Activated naive CD4-positive, alpha-beta T cell treated with anti-CD3 and anti-CD28 coated beads for 36 hours (primary cell): ENCODE measurements at regions of chr10 and their contacts with region 1.

Region 1: GRCh38 chr10:26890956-26891355 is 30.2 kb upstream of the ABI1 start:
- DNase-seq: peak; percentile 64
- H3K4me3 Mint-ChIP-seq: no peak overlapping the region
- H3K27ac Mint-ChIP-seq: no peak overlapping the region
- H3K4me1 Mint-ChIP-seq: no peaks in the 10 kb centered on the region
- H3K27me3 Mint-ChIP-seq: no peaks in the 10 kb centered on the region

Region 2: GRCh38 chr10:26566525-26567350 is 324.2 kb before region 1 on chr10:
- CTCF ChIA-PET with region 1: no interaction called
- intact Hi-C with region 1: no loop called
- DNase-seq: no peak
- H3K4me3 Mint-ChIP-seq: no peak overlapping the region
- H3K27ac Mint-ChIP-seq: no peak overlapping the region
- H3K4me1 Mint-ChIP-seq: no peaks in the 10 kb centered on the region
- H3K27me3 Mint-ChIP-seq: no peaks in the 10 kb centered on the region

Region 3: DNA sequence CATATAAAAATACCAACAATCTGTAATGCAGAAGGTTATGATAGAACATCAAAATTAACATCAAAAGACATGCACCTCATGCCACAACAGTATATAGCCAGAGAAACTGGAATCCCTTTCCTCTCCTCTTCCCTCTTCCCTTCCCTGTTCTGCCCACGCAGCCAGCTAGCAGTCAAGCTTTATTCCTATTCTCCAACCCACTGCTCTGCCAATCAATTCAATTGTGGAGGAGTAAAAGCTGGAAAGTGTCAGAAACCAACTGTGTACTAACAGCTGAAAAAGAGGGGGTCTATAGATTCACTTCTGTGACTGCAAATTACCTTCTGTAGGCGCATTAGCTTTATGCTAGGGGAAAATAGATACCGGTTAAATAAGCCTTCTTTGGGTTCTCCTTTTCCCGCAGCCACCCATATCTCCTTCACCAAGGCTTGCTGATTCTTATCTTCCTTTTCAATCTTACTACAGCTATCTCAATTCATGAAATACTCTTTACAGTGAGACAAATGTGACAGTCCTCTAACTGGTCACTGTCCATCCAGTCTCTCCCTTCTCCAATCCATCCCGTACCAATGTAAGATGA is 46.5 kb before region 1 on chr10:
- CTCF ChIA-PET with region 1: no interaction called
- intact Hi-C with region 1: no loop called
- DNase-seq: no peak
- H3K4me3 Mint-ChIP-seq: no peak overlapping the region
- H3K27ac Mint-ChIP-seq: no peak overlapping the region
- H3K4me1 Mint-ChIP-seq: peaks cover 63% of the 10 kb centered on the region
- H3K27me3 Mint-ChIP-seq: no peaks in the 10 kb centered on the region

Region 4: GRCh38 chr10:27285108-27285507 is 394.2 kb after region 1 on chr10:
- CTCF ChIA-PET with region 1: no interaction called
- intact Hi-C with region 1: loop called (anchors 1 kb)
- DNase-seq: peak; percentile 71
- H3K4me3 Mint-ChIP-seq: no peak overlapping the region
- H3K27ac Mint-ChIP-seq: peak overlapping the region; percentile 77
- H3K4me1 Mint-ChIP-seq: peaks cover 5% of the 10 kb centered on the region
- H3K27me3 Mint-ChIP-seq: no peaks in the 10 kb centered on the region

Region 5: DNA sequence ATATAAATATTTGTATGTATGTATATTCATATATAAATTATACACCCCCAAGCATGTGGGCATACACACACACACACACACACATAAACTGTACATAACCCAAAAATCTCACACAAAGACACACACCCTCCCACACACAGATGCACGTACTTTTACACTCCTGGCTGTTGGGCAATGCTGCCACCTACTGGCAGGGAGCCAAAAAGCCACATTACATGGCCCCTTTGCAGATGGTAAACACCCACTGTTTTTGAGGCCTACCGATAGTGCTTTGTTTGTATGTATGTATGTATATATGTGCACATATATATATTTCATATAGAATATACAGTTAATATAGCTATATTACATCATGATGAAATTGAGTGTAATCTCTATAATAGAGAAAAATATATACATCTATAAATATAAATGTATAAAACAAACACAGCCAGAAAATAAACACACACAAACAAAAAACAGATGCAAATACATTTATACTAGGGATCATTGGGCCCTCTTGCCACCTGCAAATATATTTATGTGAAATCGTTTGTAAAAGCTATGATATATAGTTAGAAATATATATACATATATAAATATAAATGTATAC is 469.7 kb after region 1 on chr10:
- CTCF ChIA-PET with region 1: interaction called, 3 read pairs
- intact Hi-C with region 1: loop called (anchors 1 kb)
- DNase-seq: peak; percentile 89
- H3K4me3 Mint-ChIP-seq: no peak overlapping the region
- H3K27ac Mint-ChIP-seq: no peak overlapping the region
- H3K4me1 Mint-ChIP-seq: peaks cover 3% of the 10 kb centered on the region
- H3K27me3 Mint-ChIP-seq: no peaks in the 10 kb centered on the region